IMR-90 (cell line): ENCODE measurements at regions of chr13 and their contacts with region 1.

Region 1: DNA sequence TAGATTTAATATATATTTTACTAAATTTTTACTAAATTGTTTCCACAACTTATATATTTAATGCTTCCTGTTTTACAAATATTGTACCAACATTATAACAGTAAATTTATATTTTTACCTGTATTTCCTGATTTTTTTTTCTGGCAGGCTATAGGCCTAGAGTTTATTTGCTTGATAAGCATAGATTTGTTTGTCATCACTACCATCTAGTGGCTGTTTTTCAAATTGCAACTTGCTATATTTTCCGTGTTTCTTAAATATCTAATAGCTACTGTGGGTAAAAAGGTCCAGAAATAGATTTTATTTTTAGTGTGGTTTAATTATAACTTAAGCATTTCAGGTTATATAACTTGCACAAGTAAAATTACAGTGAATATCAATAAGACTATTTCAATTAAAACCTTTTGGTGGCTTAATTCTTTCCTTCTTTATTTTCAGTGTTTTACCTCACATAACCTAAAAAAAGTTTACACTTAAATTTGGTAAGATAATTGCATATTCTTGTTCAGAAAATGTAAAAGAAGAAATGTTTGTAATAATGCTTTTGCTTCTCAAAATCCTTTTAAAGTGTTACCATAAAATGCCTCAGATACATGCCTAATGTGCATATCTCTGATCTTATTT is 60.6 kb downstream of the NDFIP2 start:
- DNase-seq: peak; percentile 73
- ATAC-seq: peak; percentile 68
- H3K4me3 ChIP-seq: no peak overlapping the region
- H3K27ac ChIP-seq: no peak overlapping the region
- H3K4me1 ChIP-seq: no peaks in the 10 kb centered on the region
- H3K27me3 ChIP-seq: no peaks in the 10 kb centered on the region
- CTCF ChIP-seq: peak; percentile 83
- POLR2A ChIP-seq: no peak
- RAD21 ChIP-seq: peak; percentile 85

Region 2: DNA sequence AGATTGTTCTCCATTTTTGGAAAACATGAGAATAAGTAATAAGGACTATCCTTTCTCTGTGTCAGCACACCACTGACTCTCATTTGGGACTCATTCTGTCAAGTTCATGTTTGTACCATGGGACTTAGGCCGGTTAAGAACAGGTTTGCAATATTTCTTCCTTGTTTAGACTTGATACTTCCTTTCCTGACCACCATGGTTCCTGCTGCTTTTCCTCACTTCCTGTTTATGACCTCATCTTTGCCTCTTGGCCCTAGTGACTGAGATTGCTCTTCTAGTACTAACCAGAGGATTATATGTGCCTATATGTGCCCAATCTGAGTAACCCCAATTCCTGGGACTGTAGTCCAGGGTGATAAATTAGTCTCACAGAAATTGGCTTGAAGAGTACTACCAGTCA is 93.1 kb before region 1 on chr13:
- CTCF ChIA-PET with region 1: no interaction called
- POLR2A ChIA-PET with region 1: no interaction called
- dilution Hi-C with region 1: loop called (anchors 25 kb)
- in situ Hi-C with region 1: no loop called
- intact Hi-C with region 1: no loop called
- DNase-seq: peak; percentile 20
- ATAC-seq: no peak
- H3K4me3 ChIP-seq: no peak overlapping the region
- H3K27ac ChIP-seq: no peak overlapping the region
- H3K4me1 ChIP-seq: no peaks in the 10 kb centered on the region; the same call in 1 of the 2 replicates
- H3K27me3 ChIP-seq: no peaks in the 10 kb centered on the region
- CTCF ChIP-seq: no peak
- POLR2A ChIP-seq: no peak
- RAD21 ChIP-seq: no peak

Region 3: DNA sequence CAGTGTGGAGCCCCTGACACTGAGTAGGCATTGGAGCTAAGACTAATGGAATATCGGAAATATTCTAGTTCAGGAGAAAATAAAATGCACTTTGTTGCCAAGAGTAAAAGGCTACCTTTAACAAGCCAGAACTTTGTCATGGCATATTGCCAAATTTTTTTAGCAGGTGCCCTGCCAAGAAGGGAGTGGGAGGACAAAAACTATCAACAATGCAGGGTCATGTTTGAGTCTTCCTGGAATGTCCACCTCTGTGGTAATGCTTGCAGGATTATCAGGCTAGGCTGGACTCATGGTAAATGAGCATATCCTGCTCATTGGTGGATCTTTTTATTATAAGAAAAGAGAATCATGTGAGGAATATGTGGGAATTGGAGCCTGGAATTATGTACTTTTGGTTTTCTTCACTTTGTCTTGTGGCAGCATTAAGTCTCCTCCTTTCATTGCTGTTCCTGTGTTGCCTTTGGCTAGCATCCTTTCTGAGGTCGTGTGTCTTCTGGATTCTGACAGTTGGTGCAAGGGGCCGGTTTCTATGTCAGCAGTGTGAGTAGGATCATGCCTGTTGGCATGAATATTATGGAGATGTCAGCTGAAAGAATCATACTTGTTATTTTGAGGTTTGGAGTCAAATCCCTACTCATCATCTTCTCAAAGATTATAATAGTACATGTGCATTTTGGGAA is 922.3 kb after region 1 on chr13:
- CTCF ChIA-PET with region 1: no interaction called
- POLR2A ChIA-PET with region 1: no interaction called
- dilution Hi-C with region 1: no loop called
- in situ Hi-C with region 1: no loop called
- intact Hi-C with region 1: no loop called
- DNase-seq: no peak
- ATAC-seq: no peak
- H3K4me3 ChIP-seq: no peak overlapping the region
- H3K27ac ChIP-seq: no peak overlapping the region
- H3K4me1 ChIP-seq: no peaks in the 10 kb centered on the region
- H3K27me3 ChIP-seq: no peaks in the 10 kb centered on the region
- CTCF ChIP-seq: no peak
- POLR2A ChIP-seq: no peak
- RAD21 ChIP-seq: no peak